ENCODE measurements at regions of chr15 and their contacts with region 1.

Region 1: GRCh38 chr15:58980351-58980939 is 7.0 kb upstream of the RNF111 start:
- DNase-seq: no peak
- H3K4me3 Mint-ChIP-seq: no peak overlapping the region
- H3K27ac Mint-ChIP-seq: no peak overlapping the region
- H3K4me1 Mint-ChIP-seq: peaks cover 33% of the 10 kb centered on the region
- H3K27me3 Mint-ChIP-seq: no peaks in the 10 kb centered on the region

Region 2: DNA sequence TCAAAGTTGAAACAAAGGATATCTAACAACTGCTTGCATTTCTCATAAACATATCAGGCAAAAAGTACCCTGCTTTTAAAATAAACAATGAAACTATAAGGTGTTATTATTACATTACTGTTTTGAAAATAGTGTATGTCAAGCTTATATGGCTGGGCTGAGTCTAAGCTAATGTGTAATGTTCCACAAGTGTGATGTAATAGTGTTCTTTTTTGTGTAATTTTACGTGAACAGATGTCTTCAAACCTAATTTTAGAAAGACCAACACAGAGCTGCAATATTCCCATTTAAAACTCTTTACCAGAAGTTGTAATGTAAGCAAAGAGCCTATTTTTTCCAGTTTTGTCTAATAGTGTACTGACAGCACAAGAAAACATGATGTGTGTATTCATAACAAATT is 175.3 kb before region 1 on chr15:
- CTCF ChIA-PET with region 1: no interaction called
- intact Hi-C with region 1: no loop called
- DNase-seq: no peak
- H3K4me3 Mint-ChIP-seq: no peak overlapping the region
- H3K27ac Mint-ChIP-seq: no peak overlapping the region
- H3K4me1 Mint-ChIP-seq: peaks cover 2% of the 10 kb centered on the region
- H3K27me3 Mint-ChIP-seq: no peaks in the 10 kb centered on the region

Region 3: DNA sequence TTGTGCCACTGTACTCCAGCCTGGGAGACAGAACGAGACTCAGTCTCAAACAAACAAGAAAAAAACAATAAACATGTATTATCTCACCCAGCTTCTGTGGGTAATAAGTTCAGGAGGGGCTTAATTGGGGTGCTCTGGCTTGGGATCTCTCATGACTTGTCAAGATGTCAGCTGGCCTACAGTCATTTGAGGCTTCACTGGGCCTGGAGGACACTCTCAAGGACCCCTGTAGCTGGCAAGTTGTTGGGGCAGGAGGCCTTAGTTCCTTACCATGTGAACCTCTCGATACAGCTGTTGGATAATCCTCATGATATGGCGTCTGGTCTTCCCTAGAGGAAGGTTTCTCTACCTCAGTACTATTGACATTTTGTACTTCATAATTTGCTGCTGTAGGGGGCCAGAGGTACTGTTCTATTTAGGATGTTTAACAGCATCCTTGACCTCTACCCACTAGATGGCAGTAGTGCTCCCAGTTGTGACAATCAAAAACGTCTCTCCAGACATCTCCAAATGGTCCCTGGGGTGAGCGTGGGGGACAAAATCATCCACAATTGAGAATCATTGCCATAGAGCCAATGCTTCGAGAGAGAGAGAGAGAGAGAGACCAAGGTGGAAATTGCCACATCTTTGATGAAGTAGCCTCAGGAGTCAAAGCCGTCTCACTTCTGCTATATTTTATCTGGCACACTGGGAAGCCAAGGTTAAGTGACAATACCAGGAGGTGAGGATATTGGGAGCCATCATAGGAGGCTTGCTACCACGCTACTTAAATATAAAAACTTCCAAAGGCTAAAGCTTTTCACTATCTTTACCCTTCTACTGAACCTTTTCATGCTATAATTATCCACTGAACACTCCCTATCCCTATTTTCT is 23.1 kb before region 1 on chr15:
- CTCF ChIA-PET with region 1: interaction called, 11 read pairs
- intact Hi-C with region 1: loop called (anchors 2 kb)
- DNase-seq: peak; percentile 75
- H3K4me3 Mint-ChIP-seq: no peak overlapping the region
- H3K27ac Mint-ChIP-seq: no peak overlapping the region
- H3K4me1 Mint-ChIP-seq: peaks cover 10% of the 10 kb centered on the region
- H3K27me3 Mint-ChIP-seq: no peaks in the 10 kb centered on the region

Region 4: DNA sequence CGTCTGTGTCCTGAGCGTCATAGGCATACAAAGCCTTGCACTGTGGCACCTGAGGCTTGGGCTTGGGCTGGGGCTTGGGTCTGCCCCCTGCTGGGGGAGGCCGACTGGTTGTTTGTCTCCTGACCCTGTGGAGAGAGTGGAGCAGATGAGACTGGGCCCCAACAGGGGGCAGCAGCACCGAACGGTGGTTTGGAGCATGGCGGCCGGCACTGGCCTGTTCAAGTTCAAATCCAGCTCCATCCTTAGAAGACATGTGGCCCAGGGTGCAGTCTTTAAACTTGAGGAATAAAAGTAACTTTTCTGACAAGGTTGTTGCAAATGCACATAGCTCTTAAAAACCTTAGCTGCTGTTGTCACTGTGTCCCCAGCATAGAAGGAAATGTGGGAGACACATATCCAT is 157.8 kb after region 1 on chr15:
- CTCF ChIA-PET with region 1: interaction called, 10 read pairs
- intact Hi-C with region 1: loop called (anchors 1 kb)
- DNase-seq: peak; percentile 68
- H3K4me3 Mint-ChIP-seq: no peak overlapping the region
- H3K27ac Mint-ChIP-seq: no peak overlapping the region
- H3K4me1 Mint-ChIP-seq: peaks cover 14% of the 10 kb centered on the region
- H3K27me3 Mint-ChIP-seq: no peaks in the 10 kb centered on the region

Region 5: GRCh38 chr15:59247364-59247763 is 266.9 kb after region 1 on chr15:
- CTCF ChIA-PET with region 1: no interaction called
- intact Hi-C with region 1: loop called (anchors 5 kb)
- DNase-seq: peak; percentile 71
- H3K4me3 Mint-ChIP-seq: no peak overlapping the region
- H3K27ac Mint-ChIP-seq: no peak overlapping the region
- H3K4me1 Mint-ChIP-seq: no peaks in the 10 kb centered on the region
- H3K27me3 Mint-ChIP-seq: no peaks in the 10 kb centered on the region

Region 6: GRCh38 chr15:59299929-59300617 is 319.6 kb after region 1 on chr15:
- CTCF ChIA-PET with region 1: no interaction called
- intact Hi-C with region 1: loop called (anchors 2 kb)
- DNase-seq: peak; percentile 87
- H3K4me3 Mint-ChIP-seq: peak overlapping the region; percentile 33
- H3K27ac Mint-ChIP-seq: peak overlapping the region; percentile 58
- H3K4me1 Mint-ChIP-seq: peaks cover 40% of the 10 kb centered on the region
- H3K27me3 Mint-ChIP-seq: no peaks in the 10 kb centered on the region

Region 7: GRCh38 chr15:59349680-59350420 is 369.4 kb after region 1 on chr15:
- CTCF ChIA-PET with region 1: no interaction called
- intact Hi-C with region 1: loop called (anchors 5 kb)
- DNase-seq: peak; percentile 40
- H3K4me3 Mint-ChIP-seq: no peak overlapping the region
- H3K27ac Mint-ChIP-seq: no peak overlapping the region
- H3K4me1 Mint-ChIP-seq: peaks cover 17% of the 10 kb centered on the region
- H3K27me3 Mint-ChIP-seq: no peaks in the 10 kb centered on the region

Region 8: DNA sequence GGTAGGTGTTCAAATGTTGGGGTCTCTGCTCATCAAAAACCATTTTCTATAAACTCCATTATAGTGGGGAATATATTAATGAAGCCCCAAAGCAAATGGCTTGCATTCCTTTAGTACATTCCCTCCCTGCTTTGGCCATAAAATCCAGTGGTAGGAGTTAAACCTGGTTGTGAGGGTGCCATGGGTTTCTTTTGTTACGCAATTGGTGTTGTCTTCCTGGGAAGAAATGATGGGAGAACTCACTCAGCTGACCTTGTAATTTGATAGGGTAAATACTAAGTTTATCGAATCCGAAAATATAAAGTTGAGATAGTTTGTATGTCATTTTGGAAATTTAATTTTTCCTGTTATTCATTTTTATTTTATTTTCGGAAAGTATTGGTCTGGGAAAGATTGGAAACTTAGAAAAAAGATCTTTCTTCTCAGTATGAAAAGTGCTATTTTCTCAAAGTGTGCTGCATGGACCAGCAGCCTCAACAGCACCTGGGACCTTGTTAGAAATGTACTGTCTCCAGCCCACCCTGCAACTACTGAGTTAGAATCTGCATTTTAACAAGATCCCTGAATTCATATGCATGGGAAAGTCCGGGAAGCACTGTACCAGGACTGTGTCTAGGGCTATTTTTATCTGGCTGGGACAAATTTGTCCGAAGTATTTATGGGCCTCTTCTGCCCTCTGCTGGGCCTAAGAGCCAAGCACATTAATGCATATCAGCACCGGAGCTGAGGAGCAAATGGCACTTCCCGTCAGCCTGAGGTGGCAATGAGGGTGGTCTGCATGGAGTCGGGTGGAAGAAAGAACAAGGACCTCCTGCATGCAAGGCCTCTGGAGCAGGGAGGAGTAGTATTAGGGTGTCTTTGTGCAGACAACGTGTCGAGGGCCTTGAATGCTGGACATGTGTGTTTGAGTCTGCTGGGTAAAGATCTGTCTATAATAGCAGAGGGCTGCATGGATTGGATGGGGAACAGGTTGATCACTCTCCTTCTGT is 512.2 kb after region 1 on chr15:
- CTCF ChIA-PET with region 1: interaction called, 8 read pairs
- intact Hi-C with region 1: loop called (anchors 1 kb)
- DNase-seq: peak; percentile 64
- H3K4me3 Mint-ChIP-seq: no peak overlapping the region
- H3K27ac Mint-ChIP-seq: no peak overlapping the region
- H3K4me1 Mint-ChIP-seq: peaks cover 2% of the 10 kb centered on the region
- H3K27me3 Mint-ChIP-seq: no peaks in the 10 kb centered on the region

Measured in activated naive CD4-positive, alpha-beta T cell treated with anti-CD3 and anti-CD28 coated beads for 36 hours (primary cell).